Caco-2 (cell line): ENCODE measurements at regions of chr19 and their contacts with region 1.

Region 1: GRCh38 chr19:33176670-33177416 is 17.3 kb upstream of the LRP3 start:
- DNase-seq: peak; percentile 99 to 100
- H3K4me3 ChIP-seq: peak overlapping the region; percentile 79
- H3K4me3 Mint-ChIP-seq: peak overlapping the region; percentile 94
- H3K27ac Mint-ChIP-seq: peak overlapping the region; percentile 98
- H3K4me1 ChIP-seq: 0 out of 2 replicates have a peak, but pooled peaks cover 5% of the 10 kb centered on the region
- H3K4me1 Mint-ChIP-seq: peaks cover 13% of the 10 kb centered on the region
- H3K27me3 ChIP-seq: no peaks in the 10 kb centered on the region
- H3K27me3 Mint-ChIP-seq: peaks cover 5% of the 10 kb centered on the region
- CTCF ChIP-seq: peak in 1 of 2 experiments; percentile 24

Region 2: DNA sequence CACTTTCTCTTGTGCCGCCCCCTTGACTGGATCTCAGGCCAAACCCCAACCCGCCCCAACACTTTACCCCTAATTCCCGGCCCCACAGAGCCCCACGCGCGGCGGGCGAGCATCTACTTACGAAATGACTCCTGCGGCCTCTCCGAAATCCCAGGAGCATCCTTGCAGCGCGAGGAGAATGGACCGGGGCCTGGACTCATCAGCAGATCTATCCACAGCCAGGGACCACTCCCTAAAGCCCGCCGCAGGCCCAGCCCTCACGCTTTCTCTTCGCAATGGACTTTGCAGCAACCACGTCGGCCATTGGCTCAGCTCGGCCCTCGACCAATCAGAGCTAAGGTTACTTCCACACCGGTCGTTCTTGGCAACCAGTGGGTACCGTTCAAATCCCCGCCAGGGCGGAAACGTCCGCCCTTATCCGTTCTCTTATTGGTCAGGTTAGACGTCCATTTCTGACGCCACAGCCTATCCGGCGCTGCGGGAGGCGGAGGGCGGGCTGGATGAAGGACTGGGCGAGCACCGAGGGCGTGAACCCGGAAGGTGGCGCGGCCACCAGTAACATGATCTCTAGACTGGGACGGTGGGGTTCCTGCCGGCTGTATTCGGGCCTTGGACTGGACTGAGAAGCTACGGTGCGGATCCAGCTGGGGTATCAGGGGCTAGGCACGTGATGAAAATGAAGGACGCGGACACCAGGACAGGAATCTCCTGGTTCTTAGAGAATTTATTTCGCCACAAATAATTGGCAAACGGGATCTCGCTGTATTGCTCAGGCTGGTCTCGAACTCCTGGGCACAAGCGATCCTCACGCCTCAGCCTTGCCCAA is 204.9 kb before region 1 on chr19 and contains the starts of genes CEP89 and FAAP24:
- CTCF ChIA-PET with region 1: interaction called, 3 read pairs
- POLR2A ChIA-PET with region 1: interaction called, 3 read pairs
- intact Hi-C with region 1: loop called (anchors 1 kb)
- DNase-seq: peak; percentile 99 to 100
- H3K4me3 ChIP-seq: peak within 1 kb of the TSS; percentile 66
- H3K4me3 Mint-ChIP-seq: peak within 1 kb of the TSS; percentile 88
- H3K27ac Mint-ChIP-seq: peak within 1 kb of the TSS; percentile 91
- H3K4me1 ChIP-seq: no peaks in the 10 kb centered on the region; the same call in 1 of the 2 replicates
- H3K4me1 Mint-ChIP-seq: no peaks in the 10 kb centered on the region
- H3K27me3 ChIP-seq: no peaks in the 10 kb centered on the region
- H3K27me3 Mint-ChIP-seq: no peaks in the 10 kb centered on the region
- CTCF ChIP-seq: no peak
- total RNA-seq, gene CEP89: 14.5 and 17.3 TPM in 2 replicates
- total RNA-seq, gene FAAP24: 9.6 and 12.0 TPM in 2 replicates

Region 3: DNA sequence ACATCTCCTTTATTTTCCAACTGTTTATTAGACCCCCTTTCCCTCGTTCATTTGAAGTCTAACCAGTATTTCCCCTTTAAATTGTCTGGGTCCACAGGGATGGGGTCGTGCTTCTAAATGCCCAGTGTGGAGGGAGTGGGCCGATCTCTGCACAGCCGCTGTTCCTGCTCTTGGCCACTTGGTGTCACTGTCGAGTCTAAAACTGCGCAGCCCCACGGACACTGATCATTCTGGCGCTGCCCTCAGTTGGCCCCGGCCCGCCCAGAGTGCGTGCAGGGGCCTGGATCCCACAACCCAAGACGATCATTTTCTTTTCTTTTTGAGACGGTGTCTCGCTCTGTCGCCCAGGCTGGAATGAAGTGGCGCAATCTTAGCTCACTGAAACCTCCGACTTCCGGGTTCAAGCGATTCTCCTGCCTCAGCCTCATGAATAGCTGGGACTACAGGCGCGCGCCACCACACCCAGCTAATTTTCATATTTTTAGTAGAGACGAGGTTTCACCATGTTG is 32.9 kb before region 1 on chr19:
- CTCF ChIA-PET with region 1: interaction called, 14 read pairs
- POLR2A ChIA-PET with region 1: interaction called, 5 read pairs
- intact Hi-C with region 1: loop called (anchors 1 kb)
- DNase-seq: peak; percentile 63 to 75
- H3K4me3 ChIP-seq: no peak overlapping the region
- H3K4me3 Mint-ChIP-seq: no peak overlapping the region
- H3K27ac Mint-ChIP-seq: no peak overlapping the region
- H3K4me1 ChIP-seq: peaks cover 17% of the 10 kb centered on the region
- H3K4me1 Mint-ChIP-seq: peaks cover 10% of the 10 kb centered on the region
- H3K27me3 ChIP-seq: no peaks in the 10 kb centered on the region
- H3K27me3 Mint-ChIP-seq: no peaks in the 10 kb centered on the region
- CTCF ChIP-seq: peak; percentile 95 to 96

Region 4: DNA sequence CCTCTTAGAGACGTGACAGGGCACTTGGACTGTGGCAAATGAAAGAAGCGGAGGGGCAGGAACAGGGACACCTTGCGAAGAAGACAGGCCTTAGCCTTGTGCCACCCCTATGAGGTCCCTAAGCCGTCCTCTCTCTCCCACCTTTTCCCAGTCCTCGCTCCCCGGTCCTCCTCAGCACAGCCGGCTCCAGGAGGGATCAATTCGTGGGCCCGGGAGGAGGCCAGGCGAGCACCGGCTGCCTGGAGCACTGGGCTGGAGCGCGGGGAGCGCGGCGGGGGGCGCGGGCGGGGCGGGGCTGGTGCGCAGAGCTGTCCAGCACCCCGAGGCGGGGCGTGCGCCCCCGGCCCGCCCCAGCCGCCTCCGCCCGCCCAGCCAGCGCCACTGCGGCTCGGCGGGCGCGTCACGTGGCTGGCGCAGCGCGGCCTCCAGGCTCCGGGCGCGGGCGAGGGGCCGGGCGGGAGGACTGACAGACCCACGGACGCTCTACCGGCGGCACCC is 17.1 kb after region 1 on chr19 and contains the start of gene LRP3:
- CTCF ChIA-PET with region 1: interaction called, 4 read pairs
- POLR2A ChIA-PET with region 1: interaction called, 3 read pairs
- intact Hi-C with region 1: loop called (anchors 1 kb)
- DNase-seq: peak; percentile 43 to 64
- H3K4me3 ChIP-seq: peak within 1 kb of the TSS; percentile 50
- H3K4me3 Mint-ChIP-seq: peak within 1 kb of the TSS; percentile 74
- H3K27ac Mint-ChIP-seq: no peak within 1 kb of the TSS
- H3K4me1 ChIP-seq: peaks cover 11% of the 10 kb centered on the region; the same call in 1 of the 2 replicates
- H3K4me1 Mint-ChIP-seq: no peaks in the 10 kb centered on the region
- H3K27me3 ChIP-seq: no peaks in the 10 kb centered on the region
- H3K27me3 Mint-ChIP-seq: peaks cover 7% of the 10 kb centered on the region
- CTCF ChIP-seq: no peak
- total RNA-seq, gene LRP3: 21.3 and 22.8 TPM in 2 replicates

Region 5: DNA sequence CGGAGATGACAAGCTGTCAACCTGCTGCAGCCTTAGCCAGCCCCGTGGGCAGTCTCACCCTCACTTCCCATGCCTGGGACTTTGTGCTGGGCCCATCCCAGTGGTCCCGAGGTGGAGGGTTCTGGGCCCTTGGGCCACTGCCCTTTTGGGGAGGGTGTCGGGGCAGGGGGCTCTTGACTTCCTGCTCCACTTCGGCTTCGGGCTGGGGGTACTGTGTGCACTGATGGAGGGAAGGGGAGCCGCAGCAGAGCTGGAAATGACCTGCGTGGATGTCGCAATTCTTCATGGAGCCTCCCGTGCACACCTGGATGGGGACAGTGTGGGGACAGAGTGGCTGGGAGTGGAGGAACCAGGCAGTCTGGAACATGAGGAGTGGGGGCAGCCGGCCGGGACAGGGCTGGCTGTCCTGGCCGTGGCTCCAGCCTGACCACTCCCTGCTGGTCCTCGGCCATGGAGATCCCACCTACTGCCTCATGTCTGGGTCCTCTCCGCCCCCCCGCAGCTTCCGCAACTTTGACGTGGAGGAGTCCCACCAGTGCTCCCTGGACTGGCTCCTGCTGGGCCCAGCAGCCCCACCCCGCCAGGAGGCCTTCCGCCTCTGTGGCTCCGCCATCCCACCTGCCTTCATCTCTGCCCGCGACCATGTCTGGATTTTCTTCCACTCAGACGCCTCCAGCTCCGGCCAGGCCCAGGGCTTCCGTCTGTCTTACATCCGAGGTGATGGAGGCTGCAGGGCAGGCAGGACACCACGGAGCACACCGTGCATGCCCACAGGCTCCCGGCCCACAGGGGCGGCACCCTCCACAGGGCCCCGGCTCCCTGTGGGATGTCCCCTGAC is 27.5 kb after region 1 on chr19:
- CTCF ChIA-PET with region 1: no interaction called
- POLR2A ChIA-PET with region 1: no interaction called
- intact Hi-C with region 1: no loop called
- DNase-seq: no peak
- H3K4me3 ChIP-seq: no peak overlapping the region
- H3K4me3 Mint-ChIP-seq: no peak overlapping the region
- H3K27ac Mint-ChIP-seq: no peak overlapping the region
- H3K4me1 ChIP-seq: no peaks in the 10 kb centered on the region
- H3K4me1 Mint-ChIP-seq: no peaks in the 10 kb centered on the region
- H3K27me3 ChIP-seq: no peaks in the 10 kb centered on the region
- H3K27me3 Mint-ChIP-seq: no peaks in the 10 kb centered on the region
- CTCF ChIP-seq: no peak